ENCODE measurements at regions of chr20 and their contacts with region 1.

Region 1: GRCh38 chr20:63223221-63224207 is 7.6 kb upstream of the YTHDF1 start:
- DNase-seq: peak; percentile 19 to 48 (median 33)
- H3K4me3 ChIP-seq: no peak overlapping the region
- H3K4me3 Mint-ChIP-seq: no peak overlapping the region
- H3K27ac ChIP-seq: no peak overlapping the region
- H3K27ac Mint-ChIP-seq: no peak overlapping the region
- H3K4me1 ChIP-seq: no peaks in the 10 kb centered on the region
- H3K4me1 Mint-ChIP-seq: no peaks in the 10 kb centered on the region
- H3K27me3 ChIP-seq: peaks cover 0 to 5% of the 10 kb centered on the region in 2 donors
- H3K27me3 Mint-ChIP-seq: peaks cover 23 to 25% (median 23%) of the 10 kb centered on the region in 3 donors
- CTCF ChIP-seq: peak; percentile 87

Region 2: DNA sequence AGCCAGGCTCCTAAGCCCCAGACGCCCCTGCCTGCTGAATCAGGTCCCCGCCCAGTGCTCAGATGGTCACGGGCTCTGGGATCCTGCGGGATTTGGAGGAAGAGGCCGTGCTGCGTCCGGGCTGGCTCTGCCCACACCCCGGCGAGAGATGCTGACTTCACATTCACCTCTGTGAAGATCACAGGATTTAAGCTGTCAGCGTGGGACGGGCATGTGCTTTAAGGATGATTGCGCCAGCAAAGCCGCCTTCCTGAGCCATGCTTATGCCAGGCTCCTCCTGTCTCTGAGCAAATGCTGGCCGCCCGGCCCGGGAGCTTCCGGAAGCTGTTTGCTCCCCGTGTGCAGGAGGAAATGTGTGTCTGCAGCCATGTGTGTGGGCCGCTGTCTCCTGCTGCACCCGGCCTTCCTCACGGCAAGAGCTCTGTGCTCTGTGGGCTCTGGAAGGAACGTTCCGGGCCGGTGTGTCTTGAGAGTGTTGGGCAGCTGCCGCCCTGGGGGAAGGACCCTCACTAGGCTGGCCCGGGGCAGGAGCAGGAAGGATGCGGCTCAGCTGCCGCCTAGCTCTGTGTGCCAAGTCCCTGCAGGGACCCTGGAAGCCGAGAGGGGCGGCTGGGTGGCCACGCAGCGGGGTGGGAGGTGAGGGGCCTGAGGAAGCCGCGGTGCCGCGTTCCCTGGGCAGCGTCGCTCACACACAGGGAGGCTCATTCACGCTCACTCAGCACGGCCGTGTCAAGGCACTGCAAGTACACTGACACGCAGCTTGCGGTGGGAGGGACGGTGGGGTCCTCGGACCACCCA is 197.8 kb before region 1 on chr20:
- intact Hi-C with region 1: no loop called
- DNase-seq: no peak
- H3K4me3 ChIP-seq: no peak overlapping the region
- H3K4me3 Mint-ChIP-seq: peak overlapping the region; percentile 43 to 70
- H3K27ac ChIP-seq: no peak overlapping the region
- H3K27ac Mint-ChIP-seq: no peak overlapping the region
- H3K4me1 ChIP-seq: no peaks in the 10 kb centered on the region
- H3K4me1 Mint-ChIP-seq: no peaks in the 10 kb centered on the region
- H3K27me3 ChIP-seq: peaks cover 0 to 37% of the 10 kb centered on the region in 2 donors
- H3K27me3 Mint-ChIP-seq: peaks cover 45 to 85% (median 52%) of the 10 kb centered on the region in 3 donors
- CTCF ChIP-seq: no peak

Region 3: GRCh38 chr20:63138855-63139341 is 84.6 kb before region 1 on chr20:
- intact Hi-C with region 1: no loop called
- DNase-seq: no peak
- H3K4me3 ChIP-seq: no peak overlapping the region
- H3K4me3 Mint-ChIP-seq: no peak overlapping the region
- H3K27ac ChIP-seq: no peak overlapping the region
- H3K27ac Mint-ChIP-seq: no peak overlapping the region
- H3K4me1 ChIP-seq: no peaks in the 10 kb centered on the region
- H3K4me1 Mint-ChIP-seq: no peaks in the 10 kb centered on the region
- H3K27me3 ChIP-seq: no peaks in the 10 kb centered on the region
- H3K27me3 Mint-ChIP-seq: peaks cover 3 to 7% (median 5%) of the 10 kb centered on the region in 3 donors
- CTCF ChIP-seq: no peak

Region 4: DNA sequence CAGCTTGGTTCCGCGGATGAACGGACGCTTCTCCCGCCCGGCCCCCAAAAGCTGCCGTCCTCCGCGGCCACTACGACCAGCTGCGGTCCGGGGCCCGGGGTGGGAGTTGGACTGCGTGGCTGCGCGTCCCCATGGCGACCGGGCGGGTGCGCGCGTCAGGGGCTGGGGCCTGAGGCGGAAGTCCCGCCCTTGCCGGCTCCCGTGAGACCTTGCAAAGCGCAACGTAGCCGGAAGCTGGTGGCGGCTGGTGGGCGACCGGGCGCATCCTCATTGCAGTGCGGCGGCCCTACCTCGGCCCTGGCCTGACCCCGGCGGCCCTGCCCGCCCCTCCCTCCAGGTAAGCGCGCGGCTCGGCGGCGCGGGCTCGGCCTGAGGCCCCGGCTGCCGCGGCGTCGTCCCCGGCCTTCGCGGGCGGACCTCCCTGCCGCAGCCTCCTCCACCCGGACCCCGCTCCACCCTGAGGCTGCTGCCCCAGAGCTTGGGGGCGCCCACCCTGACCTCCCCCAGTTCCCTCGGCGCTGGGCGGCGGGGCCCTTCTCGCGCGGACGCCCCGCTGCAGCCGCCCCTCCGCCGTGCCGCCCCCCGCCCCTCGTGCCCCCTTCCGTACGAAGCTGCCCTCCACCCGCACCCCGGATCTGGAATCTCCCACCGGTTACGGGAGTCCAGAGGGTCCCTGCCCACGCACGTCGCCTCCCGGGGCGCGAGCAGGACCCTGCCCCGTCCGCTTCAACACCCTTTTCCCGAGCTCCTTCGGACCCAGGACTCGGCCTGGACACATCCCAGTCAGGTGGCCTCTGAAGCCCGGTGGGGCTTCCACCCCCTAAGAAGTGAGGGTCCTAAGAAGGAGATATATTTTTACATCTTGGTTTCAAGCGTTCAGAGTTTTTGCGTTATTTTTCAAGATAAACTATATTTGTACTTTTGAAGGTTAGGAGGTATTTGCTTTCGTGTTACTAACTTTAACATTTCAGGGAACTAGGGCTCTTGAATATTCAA is 49.4 kb after region 1 on chr20 and contains the start of gene ARFGAP1:
- intact Hi-C with region 1: loop called in 1 of 2 experiments (anchors 5 kb)
- DNase-seq: peak; percentile 80 to 86 (median 84)
- H3K4me3 ChIP-seq: peak within 1 kb of the TSS; percentile 75 to 87 (median 87)
- H3K4me3 Mint-ChIP-seq: peak within 1 kb of the TSS; percentile 84 to 91
- H3K27ac ChIP-seq: peak within 1 kb of the TSS; percentile 56 to 84
- H3K27ac Mint-ChIP-seq: peak within 1 kb of the TSS; percentile 74 to 93 (median 86)
- H3K4me1 ChIP-seq: peaks cover 17 to 19% of the 10 kb centered on the region in 2 donors
- H3K4me1 Mint-ChIP-seq: peaks cover 22% of the 10 kb centered on the region
- H3K27me3 ChIP-seq: peaks cover 0 to 3% of the 10 kb centered on the region in 2 donors
- H3K27me3 Mint-ChIP-seq: peaks cover 1 to 18% (median 8%) of the 10 kb centered on the region in 3 donors
- CTCF ChIP-seq: no peak
- polyA plus RNA-seq, gene ARFGAP1: 11.2 to 99.8 (median 14.1) TPM

Measured in CD14-positive monocyte (primary cell).